ENCODE measurements at regions of chr6 and their contacts with region 1.

Region 1: GRCh38 chr6:124870611-124871459 is 91.4 kb upstream of the RNF217 start:
- DNase-seq: peak; percentile 37

Region 2: GRCh38 chr6:124622351-124622750 is 248.5 kb before region 1 on chr6:
- in situ Hi-C with region 1: no loop called
- DNase-seq: no peak

Region 3: GRCh38 chr6:125046107-125046925 is 175.5 kb after region 1 on chr6:
- in situ Hi-C with region 1: no loop called
- DNase-seq: no peak

Region 4: GRCh38 chr6:125099211-125100073 is 228.6 kb after region 1 on chr6:
- in situ Hi-C with region 1: loop called (anchors 25 kb)
- DNase-seq: peak; percentile 73